ENCODE measurements at regions of chr12 and their contacts with region 1.

Region 1: GRCh38 chr12:18320036-18320617 is 58.8 kb downstream of the PIK3C2G start:
- DNase-seq: peak; percentile 50 to 68
- H3K4me3 ChIP-seq: no peak overlapping the region
- H3K27ac ChIP-seq: no peak overlapping the region
- H3K4me1 ChIP-seq: 0 out of 2 replicates have a peak, but pooled peaks cover 6% of the 10 kb centered on the region
- H3K27me3 ChIP-seq: no peaks in the 10 kb centered on the region
- CTCF ChIP-seq: peak; percentile 59

Region 2: DNA sequence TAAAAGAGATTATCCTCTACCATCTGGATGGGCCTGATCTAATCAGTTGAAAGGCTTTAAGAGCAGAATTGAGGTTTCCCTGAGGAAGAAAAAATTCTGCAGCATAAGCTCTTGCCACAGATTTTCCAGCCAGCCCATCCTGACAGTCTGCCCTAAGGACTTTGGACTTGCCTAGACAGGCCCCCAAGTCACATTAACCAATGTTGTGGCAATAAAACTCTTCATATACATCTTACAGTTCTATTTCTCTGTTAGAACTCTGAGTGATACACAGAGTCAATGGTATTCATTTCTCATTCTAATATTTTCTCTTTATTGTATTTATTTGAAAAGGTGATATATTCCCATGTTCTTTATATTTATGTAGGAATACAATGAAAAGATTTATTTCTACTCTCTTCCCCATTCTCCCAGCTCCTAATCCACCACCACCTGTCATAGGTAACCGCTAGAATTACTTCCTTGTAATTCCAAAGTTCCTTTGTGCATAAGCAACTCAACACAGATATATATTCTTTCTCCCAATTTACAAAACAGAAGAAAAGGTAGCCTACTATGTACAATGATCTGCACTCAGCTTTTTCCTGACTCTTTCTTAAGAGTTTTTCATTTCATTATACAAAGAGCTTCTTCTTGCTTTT is 599.9 kb after region 1 on chr12:
- CTCF ChIA-PET with region 1: interaction called, 15 read pairs
- POLR2A ChIA-PET with region 1: no interaction called
- intact Hi-C with region 1: no loop called
- DNase-seq: no peak
- H3K4me3 ChIP-seq: no peak overlapping the region
- H3K27ac ChIP-seq: no peak overlapping the region
- H3K4me1 ChIP-seq: no peaks in the 10 kb centered on the region
- H3K27me3 ChIP-seq: no peaks in the 10 kb centered on the region
- CTCF ChIP-seq: no peak

Measured in PC-9 (cell line).